Activated CD4-positive, alpha-beta memory T cell treated with anti-CD3 and anti-CD28 coated beads, Interleukin-2, amount 10 ng/mL, durations not matched to agents 7 days and 5 days (primary cell): ENCODE measurements at regions of chr19 and their contacts with region 1.

Region 1: DNA sequence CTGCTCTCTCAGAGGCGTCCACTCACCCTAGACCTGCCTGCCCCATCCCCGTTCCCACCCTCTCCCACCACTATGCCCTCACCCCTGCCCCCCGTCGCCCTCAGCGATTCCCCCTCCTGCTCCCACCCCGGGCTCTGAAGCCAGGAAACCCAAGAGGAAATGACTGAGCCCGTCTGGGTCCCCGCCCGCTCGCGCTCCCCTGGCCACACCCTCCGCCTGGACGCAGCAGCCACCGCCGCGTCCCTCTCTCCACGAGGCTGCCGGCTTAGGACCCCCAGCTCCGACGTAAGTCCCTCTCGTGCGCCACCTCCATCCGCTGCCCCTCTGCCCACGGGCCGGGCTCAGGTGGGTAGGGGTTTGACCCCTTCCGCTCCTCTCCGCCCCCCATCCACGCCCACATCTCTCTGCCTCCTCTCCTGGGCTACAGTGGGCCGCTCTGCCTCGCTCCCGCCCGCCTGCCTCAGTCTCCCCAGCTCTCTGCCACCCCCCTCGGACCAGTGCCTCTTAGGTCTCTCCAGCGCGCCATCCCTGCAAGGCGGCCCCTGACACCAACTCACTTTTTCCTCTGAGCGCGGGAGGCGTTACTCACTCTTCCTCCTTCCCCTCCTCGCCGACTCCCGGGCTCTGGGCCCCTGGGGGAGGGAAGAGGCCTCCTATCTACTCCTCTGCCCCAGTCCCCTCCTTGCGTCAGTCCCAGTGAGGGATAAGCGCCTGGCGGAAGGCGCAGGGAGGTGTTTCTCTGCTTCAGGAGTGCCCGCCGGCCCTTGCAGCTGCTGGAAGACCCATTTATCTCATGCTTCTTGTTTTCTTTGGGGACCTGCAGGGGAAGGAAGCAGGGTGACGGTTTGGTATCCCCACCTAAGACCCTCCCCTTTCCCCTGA is at the start of gene FXYD5:
- DNase-seq: peak; percentile 76
- H3K4me3 Mint-ChIP-seq: peak within 1 kb of the TSS; percentile 100
- H3K27ac Mint-ChIP-seq: peak within 1 kb of the TSS; percentile 97
- H3K4me1 Mint-ChIP-seq: peaks cover 57% of the 10 kb centered on the region
- H3K27me3 Mint-ChIP-seq: peaks cover 4% of the 10 kb centered on the region
- total RNA-seq, gene FXYD5: 588 to 589 TPM

Region 2: DNA sequence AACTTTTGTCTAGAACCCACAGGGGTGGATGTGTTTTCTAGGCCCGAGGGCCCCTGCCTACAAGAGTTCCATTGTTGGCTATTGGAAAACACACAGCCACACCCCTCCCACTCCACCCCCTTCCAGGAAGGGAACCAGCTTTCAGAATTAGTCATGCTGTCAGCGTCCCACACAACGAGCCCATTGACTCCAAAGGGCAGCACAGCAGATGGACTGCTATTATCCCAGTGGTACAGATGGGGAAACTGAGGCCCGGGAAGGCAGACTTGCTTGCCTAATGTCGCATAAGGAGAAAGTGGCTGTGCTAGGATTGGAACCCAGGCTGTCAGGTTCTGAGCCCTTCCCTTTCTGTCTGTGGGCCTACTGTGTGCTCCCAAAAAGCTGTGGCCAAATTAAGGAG is 47.2 kb before region 1 on chr19:
- CTCF ChIA-PET with region 1: no interaction called
- POLR2A ChIA-PET with region 1: no interaction called
- DNase-seq: no peak
- H3K4me3 Mint-ChIP-seq: no peak overlapping the region
- H3K27ac Mint-ChIP-seq: no peak overlapping the region
- H3K4me1 Mint-ChIP-seq: peaks cover 5% of the 10 kb centered on the region
- H3K27me3 Mint-ChIP-seq: no peaks in the 10 kb centered on the region

Region 3: GRCh38 chr19:35135389-35135909 is 19.3 kb before region 1 on chr19:
- CTCF ChIA-PET with region 1: interaction called, 13 read pairs
- POLR2A ChIA-PET with region 1: interaction called, 39 read pairs
- DNase-seq: peak; percentile 72
- H3K4me3 Mint-ChIP-seq: no peak overlapping the region
- H3K27ac Mint-ChIP-seq: no peak overlapping the region
- H3K4me1 Mint-ChIP-seq: peaks cover 6% of the 10 kb centered on the region
- H3K27me3 Mint-ChIP-seq: peaks cover 17% of the 10 kb centered on the region

Region 4: GRCh38 chr19:35140962-35141637 is 13.7 kb before region 1 on chr19:
- CTCF ChIA-PET with region 1: interaction called, 47 read pairs
- POLR2A ChIA-PET with region 1: interaction called, 39 read pairs
- DNase-seq: peak; percentile 98
- H3K4me3 Mint-ChIP-seq: peak overlapping the region; percentile 76
- H3K27ac Mint-ChIP-seq: peak overlapping the region; percentile 52
- H3K4me1 Mint-ChIP-seq: peaks cover 35% of the 10 kb centered on the region
- H3K27me3 Mint-ChIP-seq: peaks cover 33% of the 10 kb centered on the region

Region 5: GRCh38 chr19:35168207-35168606 is 13.4 kb after region 1 on chr19:
- CTCF ChIA-PET with region 1: interaction called, 8 read pairs
- POLR2A ChIA-PET with region 1: interaction called, 106 read pairs
- DNase-seq: no peak
- H3K4me3 Mint-ChIP-seq: no peak overlapping the region
- H3K27ac Mint-ChIP-seq: peak overlapping the region; percentile 54
- H3K4me1 Mint-ChIP-seq: peaks cover 59% of the 10 kb centered on the region
- H3K27me3 Mint-ChIP-seq: no peaks in the 10 kb centered on the region

Region 6: DNA sequence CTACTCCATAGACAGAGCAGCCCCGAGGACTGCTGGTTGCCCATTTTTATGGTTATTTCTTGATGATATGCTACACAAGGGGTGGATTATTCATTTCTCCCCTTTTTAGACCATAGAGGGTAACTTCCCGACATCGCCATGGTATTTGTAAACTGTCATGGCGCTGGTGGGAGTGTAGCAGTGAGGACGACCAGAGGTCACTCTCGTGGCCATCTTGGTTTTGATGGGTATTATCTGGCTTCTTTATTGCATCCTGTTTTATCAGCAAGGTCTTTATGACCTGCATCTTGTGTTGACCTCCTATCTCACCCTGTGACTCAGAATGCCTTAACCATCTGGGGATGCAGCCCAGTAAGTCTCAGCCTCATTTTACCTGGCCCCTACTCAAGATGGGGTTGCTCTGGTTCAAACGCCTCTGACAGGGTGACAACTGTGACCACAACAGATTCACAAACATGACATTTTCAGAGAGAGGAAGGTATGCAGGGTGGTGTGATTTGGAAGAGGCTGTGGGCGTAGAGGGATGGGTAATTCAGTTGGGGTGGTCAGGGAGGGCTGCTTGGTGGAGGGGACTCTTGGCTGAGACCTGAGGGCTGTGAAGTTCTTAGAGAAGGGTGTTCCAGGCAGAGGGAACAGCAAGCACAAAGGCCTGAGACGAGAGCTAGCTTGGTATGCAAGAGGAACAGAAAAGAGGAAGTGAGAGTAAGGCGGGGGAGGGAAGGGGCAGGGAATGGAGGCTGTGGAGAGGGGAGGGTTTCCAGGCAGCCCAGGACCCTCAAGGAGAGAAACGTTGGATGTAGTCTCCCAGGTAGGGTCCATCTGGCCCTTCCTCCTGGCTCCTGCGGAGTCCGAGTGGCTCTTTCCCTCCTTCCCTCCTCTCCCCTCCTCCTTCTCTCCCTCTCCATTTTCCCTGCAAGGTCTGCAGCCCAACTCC is 50.3 kb after region 1 on chr19:
- CTCF ChIA-PET with region 1: interaction called, 4 read pairs
- POLR2A ChIA-PET with region 1: interaction called, 33 read pairs
- DNase-seq: peak; percentile 27
- H3K4me3 Mint-ChIP-seq: no peak overlapping the region
- H3K27ac Mint-ChIP-seq: peak overlapping the region; percentile 97
- H3K4me1 Mint-ChIP-seq: peaks cover 73% of the 10 kb centered on the region
- H3K27me3 Mint-ChIP-seq: no peaks in the 10 kb centered on the region

Region 7: DNA sequence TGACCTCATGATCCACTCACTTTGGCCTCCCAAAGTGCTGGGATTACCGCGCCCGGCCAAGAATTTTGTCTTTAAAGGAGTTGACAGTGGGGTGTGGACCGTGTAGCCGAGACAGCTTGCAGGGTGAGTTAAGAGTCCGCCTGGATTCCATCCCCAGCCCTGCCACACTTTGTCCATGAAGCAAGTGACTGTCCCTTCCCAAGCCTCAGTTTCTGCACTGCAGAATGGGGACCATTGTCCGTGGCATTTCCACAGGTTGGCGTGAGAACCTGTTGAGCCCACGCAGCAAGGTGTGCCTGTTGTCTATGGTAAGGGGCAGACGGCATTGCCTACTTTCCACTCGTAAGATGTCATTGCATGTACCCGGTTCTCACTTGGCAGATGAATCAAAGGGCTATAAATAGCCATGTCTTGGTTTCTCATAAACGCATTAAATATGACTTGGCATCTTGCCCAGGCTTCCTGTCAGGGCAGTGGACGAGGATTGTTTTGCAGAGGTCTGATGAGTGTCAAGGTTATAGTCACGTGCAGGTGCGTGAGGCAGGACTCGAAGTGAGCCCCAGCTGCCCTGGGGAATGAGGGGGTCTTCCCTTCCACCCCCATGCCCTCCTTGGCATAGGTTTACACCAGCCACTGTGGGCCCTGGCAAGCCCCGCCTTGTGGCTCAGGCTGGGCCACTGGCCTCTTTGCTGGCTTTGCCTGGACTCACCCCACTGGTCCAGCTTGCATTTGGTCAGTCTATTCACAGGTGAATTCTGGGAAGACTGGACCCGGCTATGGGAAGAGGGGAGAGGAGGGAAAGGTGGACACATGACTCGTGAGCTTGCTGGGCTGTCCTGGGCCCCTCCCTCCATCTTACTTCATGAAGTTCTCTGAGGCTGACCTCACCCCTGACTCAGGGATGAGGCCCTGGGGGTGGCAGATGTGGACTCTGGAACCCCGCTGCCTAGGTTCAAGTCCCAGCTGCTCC is 59.2 kb after region 1 on chr19:
- CTCF ChIA-PET with region 1: interaction called, 17 read pairs
- POLR2A ChIA-PET with region 1: interaction called, 64 read pairs
- DNase-seq: peak; percentile 78
- H3K4me3 Mint-ChIP-seq: peak overlapping the region; percentile 7
- H3K27ac Mint-ChIP-seq: peak overlapping the region; percentile 99
- H3K4me1 Mint-ChIP-seq: peaks cover 75% of the 10 kb centered on the region
- H3K27me3 Mint-ChIP-seq: no peaks in the 10 kb centered on the region

Region 8: GRCh38 chr19:35269421-35270117 is 114.8 kb after region 1 on chr19:
- CTCF ChIA-PET with region 1: interaction called, 6 read pairs
- POLR2A ChIA-PET with region 1: interaction called, 28 read pairs
- DNase-seq: peak; percentile 78
- H3K4me3 Mint-ChIP-seq: peak overlapping the region; percentile 66
- H3K27ac Mint-ChIP-seq: peak overlapping the region; percentile 64
- H3K4me1 Mint-ChIP-seq: peaks cover 32% of the 10 kb centered on the region
- H3K27me3 Mint-ChIP-seq: no peaks in the 10 kb centered on the region